ENCODE measurements at regions of chr1 and their contacts with region 1.

Region 1: DNA sequence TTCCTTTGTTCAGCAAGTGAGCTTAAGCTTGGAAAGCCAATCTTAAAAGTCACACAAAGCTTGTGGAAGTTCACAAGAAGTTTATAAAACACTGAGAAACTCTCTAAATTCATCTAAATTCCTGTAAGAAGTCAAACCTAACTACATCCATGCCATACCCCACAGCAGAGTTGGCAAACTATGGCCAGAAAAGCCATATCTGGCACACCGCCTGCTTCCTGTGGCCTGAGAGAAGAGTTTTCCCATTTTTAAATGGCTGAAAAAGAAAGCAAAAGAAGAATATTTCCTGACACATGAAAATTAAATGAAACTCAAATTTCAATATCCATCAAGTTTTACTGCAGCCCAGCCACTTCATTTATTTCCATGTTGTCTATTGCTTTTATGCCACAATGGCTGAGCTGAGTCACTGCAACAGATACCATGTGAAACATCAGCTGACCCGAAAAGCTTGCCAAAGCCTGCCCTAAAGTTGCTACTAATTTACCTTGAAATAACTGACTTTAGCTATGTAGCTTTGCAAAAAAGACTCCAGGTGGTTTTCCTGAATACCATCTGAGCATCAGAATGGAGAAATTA is 237.1 kb downstream of the SLC45A1 start:
- DNase-seq: no peak
- ATAC-seq: no peak

Region 2: GRCh38 chr1:8848663-8849386 is 293.8 kb after region 1 on chr1:
- intact Hi-C with region 1: loop called in 1 of 2 experiments (anchors 10 kb)
- DNase-seq: peak; percentile 94
- ATAC-seq: peak; percentile 97 to 98